Activated CD4-positive, alpha-beta memory T cell treated with anti-CD3 and anti-CD28 coated beads, Interleukin-2, amount 10 ng/mL, durations not matched to agents 7 days and 5 days (primary cell): ENCODE measurements at regions of chr2 and their contacts with region 1.

Region 1: GRCh38 chr2:27133905-27134780 is at the start of gene PREB:
- DNase-seq: peak; percentile 98
- H3K4me3 Mint-ChIP-seq: peak within 1 kb of the TSS; percentile 96
- H3K27ac Mint-ChIP-seq: peak within 1 kb of the TSS; percentile 96
- H3K4me1 Mint-ChIP-seq: peaks cover 34% of the 10 kb centered on the region
- H3K27me3 Mint-ChIP-seq: no peaks in the 10 kb centered on the region
- total RNA-seq, gene PREB: 67.4 to 72.7 TPM

Region 2: GRCh38 chr2:27071277-27071989 is 62.7 kb before region 1 on chr2 and contains the start of gene OST4:
- CTCF ChIA-PET with region 1: interaction called, 5 read pairs
- POLR2A ChIA-PET with region 1: interaction called, 12 read pairs
- DNase-seq: peak; percentile 93
- H3K4me3 Mint-ChIP-seq: peak within 1 kb of the TSS; percentile 99
- H3K27ac Mint-ChIP-seq: peak within 1 kb of the TSS; percentile 95
- H3K4me1 Mint-ChIP-seq: peaks cover 73% of the 10 kb centered on the region
- H3K27me3 Mint-ChIP-seq: no peaks in the 10 kb centered on the region
- total RNA-seq, gene OST4: 305 to 312 TPM

Region 3: GRCh38 chr2:27086090-27086723 is 47.9 kb before region 1 on chr2:
- CTCF ChIA-PET with region 1: interaction called, 4 read pairs
- POLR2A ChIA-PET with region 1: interaction called, 14 read pairs
- DNase-seq: peak; percentile 98
- H3K4me3 Mint-ChIP-seq: peak overlapping the region; percentile 79
- H3K27ac Mint-ChIP-seq: peak overlapping the region; percentile 80
- H3K4me1 Mint-ChIP-seq: peaks cover 41% of the 10 kb centered on the region
- H3K27me3 Mint-ChIP-seq: no peaks in the 10 kb centered on the region

Region 4: DNA sequence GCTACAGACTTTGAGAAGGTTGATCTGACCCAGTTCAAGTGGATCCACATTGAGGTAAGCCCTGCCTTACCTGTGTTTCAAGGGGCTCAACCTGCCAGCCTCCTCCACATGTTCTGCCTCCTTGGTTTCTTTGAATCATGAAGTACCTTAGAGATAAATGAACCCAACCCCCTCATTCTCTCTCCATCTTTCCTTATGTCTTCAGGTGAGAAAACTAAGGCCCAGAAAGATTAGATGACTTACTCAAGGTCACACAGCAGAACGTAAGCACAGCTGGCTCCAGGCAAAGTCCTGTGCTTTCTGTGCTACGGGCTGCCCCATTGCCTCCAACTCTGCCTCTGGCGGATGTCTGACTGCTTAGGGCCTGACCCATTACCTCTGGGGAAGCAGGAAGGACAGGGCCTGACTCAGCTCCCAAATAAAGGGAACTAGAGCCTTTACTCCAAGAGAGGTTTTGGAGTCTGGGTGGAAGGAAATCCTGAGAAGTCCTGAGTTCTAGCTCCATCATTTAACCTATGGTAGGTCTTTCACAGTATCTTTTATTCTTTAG is 37.3 kb before region 1 on chr2:
- CTCF ChIA-PET with region 1: no interaction called
- POLR2A ChIA-PET with region 1: no interaction called
- DNase-seq: no peak
- H3K4me3 Mint-ChIP-seq: no peak overlapping the region
- H3K27ac Mint-ChIP-seq: no peak overlapping the region
- H3K4me1 Mint-ChIP-seq: peaks cover 12% of the 10 kb centered on the region
- H3K27me3 Mint-ChIP-seq: no peaks in the 10 kb centered on the region

Region 5: DNA sequence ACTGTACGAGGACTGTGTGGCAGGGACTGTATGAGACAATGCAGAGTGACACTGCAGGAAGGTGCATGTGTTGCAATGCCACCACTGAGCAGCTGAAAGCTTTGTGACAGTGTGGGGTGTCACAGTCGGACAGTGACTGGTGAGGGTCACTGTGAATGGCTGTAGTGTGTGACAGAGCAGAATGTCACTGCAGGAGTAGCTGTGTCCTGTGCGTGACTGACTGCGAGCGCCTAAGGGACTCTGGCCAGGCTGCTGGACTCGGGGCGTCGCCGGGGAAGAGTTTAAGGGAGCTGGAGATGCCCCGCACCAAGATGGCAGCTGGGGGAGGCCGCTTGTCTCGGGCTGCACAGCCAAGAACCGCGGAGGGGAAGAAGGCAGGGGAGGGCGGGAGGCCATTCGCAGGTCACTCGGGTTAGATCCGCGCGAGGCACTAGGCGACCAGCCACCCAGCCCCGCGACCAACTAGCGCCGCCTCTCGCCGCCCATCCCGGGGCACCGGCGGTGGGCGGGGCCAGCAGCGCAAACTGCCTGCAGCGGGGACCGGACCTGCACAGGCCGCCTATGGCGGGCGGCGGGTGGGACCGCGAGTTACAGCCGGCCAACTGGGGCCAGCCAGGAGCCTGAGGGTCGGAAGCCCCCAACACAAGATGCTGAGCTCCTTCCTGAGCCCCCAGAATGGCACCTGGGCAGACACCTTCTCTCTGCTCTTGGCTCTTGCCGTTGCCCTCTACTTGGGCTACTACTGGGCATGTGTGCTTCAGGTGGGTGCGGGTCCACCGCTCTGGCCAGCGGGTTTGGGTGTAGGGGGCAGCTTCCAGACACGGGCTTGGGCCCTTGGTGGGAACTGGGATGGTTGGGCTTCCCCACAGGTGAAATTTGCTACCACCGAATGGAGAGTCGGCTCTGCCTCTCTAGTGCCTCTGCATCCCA is 10.6 kb before region 1 on chr2 and contains the start of gene ABHD1:
- CTCF ChIA-PET with region 1: interaction called, 26 read pairs
- POLR2A ChIA-PET with region 1: interaction called, 57 read pairs
- DNase-seq: peak; percentile 62
- H3K4me3 Mint-ChIP-seq: peak within 1 kb of the TSS; percentile 79
- H3K27ac Mint-ChIP-seq: no peak within 1 kb of the TSS
- H3K4me1 Mint-ChIP-seq: peaks cover 14% of the 10 kb centered on the region
- H3K27me3 Mint-ChIP-seq: peaks cover 41% of the 10 kb centered on the region
- total RNA-seq, gene ABHD1: 0.13 to 0.20 TPM

Region 6: DNA sequence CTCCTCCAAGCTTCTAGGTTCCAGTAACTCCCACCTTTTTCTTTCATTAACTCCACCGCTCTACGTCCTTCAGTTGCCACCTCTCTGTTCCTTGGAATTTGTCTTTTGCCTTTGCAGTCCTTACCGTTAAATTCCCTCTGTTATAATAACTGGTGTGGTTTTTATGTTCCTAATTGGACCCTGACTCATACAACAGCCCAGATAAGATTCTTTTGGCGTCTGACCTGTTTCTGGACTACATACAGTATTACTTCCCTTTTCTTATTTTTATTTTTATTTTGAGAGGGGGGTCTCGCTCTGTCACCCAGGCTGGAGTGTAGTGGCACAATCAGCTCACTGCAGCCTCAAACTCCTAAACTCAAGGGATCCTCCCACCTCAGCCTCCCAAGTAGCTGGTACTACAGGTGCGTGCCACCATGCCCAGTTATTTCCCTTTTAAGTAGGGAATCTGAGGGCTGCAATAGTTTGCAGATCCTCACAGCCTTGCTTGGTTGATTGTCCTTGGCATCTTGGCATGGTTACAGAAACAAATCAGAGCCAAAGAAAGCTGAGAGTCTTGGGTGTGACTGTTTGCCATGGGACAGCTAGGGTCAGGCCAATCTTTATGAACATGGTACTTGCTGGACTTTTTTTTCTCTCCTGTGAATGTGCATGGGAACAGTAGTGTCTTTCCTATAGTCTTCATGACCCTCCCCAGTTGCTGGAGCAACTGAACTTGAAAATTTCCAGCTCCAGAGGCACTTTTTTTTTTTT is 36.6 kb after region 1 on chr2:
- CTCF ChIA-PET with region 1: interaction called, 14 read pairs
- POLR2A ChIA-PET with region 1: no interaction called
- DNase-seq: no peak
- H3K4me3 Mint-ChIP-seq: no peak overlapping the region
- H3K27ac Mint-ChIP-seq: no peak overlapping the region
- H3K4me1 Mint-ChIP-seq: peaks cover 3% of the 10 kb centered on the region
- H3K27me3 Mint-ChIP-seq: peaks cover 13% of the 10 kb centered on the region